ENCODE measurements at regions of chr2 and their contacts with region 1.

Region 1: GRCh38 chr2:96208143-96209010 is at the start of gene STARD7:
- DNase-seq: peak; percentile 98
- H3K4me3 Mint-ChIP-seq: peak within 1 kb of the TSS; percentile 89
- H3K27ac Mint-ChIP-seq: peak within 1 kb of the TSS; percentile 92
- H3K4me1 Mint-ChIP-seq: peaks cover 55% of the 10 kb centered on the region
- H3K27me3 Mint-ChIP-seq: no peaks in the 10 kb centered on the region

Region 2: DNA sequence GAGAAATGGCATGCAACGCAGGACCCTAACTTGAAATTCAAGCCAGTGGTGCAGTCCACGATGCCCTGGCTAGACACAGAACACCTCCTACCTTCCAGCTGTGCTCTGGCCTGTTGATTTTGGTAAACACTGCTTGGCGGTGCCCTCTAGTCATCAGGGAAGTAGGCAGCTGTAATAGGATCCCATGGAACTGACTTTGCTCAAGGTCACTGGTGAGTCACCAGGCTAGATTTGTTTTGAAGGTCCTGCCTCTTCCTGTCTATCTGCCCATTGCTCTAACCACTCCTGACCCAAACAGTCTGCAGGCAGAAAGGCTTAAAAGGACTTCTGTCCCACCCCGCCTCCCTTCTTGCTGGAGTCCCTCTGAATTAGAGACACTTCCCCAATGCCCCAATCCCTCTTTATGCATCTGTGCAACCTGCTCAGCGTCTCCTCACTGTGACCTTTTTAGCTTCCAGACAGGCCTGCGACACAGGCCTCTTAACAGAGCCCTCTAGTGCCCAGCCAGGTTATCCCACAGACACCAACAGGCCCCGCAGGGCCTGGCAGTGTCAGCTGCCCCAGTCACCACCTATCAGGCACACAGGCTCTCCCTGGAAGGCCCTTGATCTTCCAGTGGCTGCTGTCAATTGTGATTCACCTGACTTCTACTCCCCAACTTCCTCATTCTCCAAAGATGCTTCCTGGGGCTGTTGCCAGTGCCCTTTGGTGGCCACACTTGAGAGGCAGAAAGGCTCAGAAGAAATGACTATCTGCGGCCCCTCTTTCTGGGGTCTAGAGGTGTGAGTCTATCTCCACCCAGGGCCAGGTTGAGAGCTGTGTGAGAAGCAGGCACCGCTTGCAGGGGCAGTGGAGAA is 52.3 kb after region 1 on chr2:
- CTCF ChIA-PET with region 1: interaction called, 10 read pairs
- DNase-seq: peak; percentile 64
- H3K4me3 Mint-ChIP-seq: no peak overlapping the region
- H3K27ac Mint-ChIP-seq: peak overlapping the region; percentile 83
- H3K4me1 Mint-ChIP-seq: peaks cover 83% of the 10 kb centered on the region
- H3K27me3 Mint-ChIP-seq: no peaks in the 10 kb centered on the region

Measured in activated naive CD4-positive, alpha-beta T cell treated with anti-CD3 and anti-CD28 coated beads, Interleukin-2, amount 10 ng/mL, durations not matched to agents 7 days and 5 days (primary cell).